ENCODE measurements at regions of chr4 and their contacts with region 1.

Region 1: DNA sequence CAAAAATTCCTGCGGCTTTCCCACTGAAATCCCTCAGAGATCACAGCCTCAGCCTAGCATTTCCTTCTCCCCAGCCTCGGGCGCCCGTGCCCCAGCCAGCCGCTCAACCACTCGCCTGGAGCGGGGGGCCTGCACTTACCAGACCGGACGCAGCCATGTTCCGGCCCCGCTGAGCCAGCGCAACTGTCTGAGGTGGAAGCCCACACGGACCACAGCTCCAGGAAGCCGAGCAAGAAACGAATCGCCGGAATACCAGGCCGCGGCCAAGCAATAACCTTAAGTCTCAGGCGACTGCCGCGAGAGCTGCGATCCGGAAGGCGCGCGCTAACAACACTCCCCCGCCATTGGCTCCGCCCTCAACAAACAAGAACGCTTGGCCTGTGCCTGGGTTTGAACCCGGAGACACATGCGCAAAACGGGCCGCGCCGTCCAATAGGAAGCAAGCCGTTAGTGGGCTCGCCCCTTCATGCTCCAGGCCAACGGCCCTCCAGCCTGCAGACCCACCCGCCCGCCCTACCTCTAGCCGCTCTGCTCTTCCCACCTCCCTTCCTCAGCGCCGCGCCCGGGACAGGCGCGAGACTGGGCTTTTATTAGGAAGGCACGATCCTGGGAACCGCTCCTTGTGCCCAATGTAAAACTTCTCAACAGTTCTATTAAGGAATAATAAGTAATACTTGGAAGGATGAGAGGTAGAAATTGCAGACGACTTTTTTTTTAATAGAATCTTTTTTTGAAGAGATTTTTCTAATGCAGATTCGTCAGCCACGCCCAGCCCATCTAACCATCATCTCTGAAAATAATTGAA is at the start of gene CENPC:
- DNase-seq: peak; percentile 92 to 99 (median 94)
- ATAC-seq: peak; percentile 96
- H3K4me3 ChIP-seq: peak within 1 kb of the TSS; percentile 88
- H3K27ac ChIP-seq: peak within 1 kb of the TSS; percentile 97
- H3K4me1 ChIP-seq: peaks cover 0 to 14% of the 10 kb centered on the region in 2 experiments; a peak in 2 of 5 replicates
- H3K27me3 ChIP-seq: no peaks in the 10 kb centered on the region
- CTCF ChIP-seq: no peak
- EP300 ChIP-seq: peak; percentile 11; the same call in 1 of the 2 replicates
- POLR2A ChIP-seq: peak; percentile 97
- RAD21 ChIP-seq: no peak
- polyA plus RNA-seq, gene CENPC: 18.1 TPM

Region 2: DNA sequence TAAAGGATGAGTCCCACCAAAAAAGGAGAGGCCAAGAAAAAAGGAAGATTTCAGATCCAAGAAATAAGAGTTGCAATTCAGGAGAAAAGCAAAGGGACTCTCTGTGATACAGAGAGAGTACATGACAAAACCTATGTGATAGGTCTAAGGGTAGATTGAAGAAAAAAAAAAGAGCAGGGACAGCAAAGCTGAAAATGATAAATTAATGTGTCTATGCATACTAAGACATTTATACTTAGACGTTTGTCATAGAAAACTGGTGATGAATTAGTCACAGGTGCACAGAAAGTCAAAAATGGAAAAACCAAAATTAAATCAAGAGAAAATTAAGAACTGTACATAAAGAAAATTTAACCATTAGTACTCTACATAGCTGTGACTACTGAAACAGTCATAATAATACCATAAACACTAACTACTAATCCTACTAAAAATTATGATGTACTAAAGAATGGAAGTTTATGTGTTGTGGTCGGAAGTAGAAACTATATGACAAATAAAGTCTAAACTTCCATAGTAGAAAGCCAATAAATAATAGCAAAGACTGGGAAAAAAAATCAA is 10.0 kb before region 1 on chr4:
- CTCF ChIA-PET with region 1: no interaction called
- POLR2A ChIA-PET with region 1: interaction called, 12 read pairs
- in situ Hi-C with region 1: no loop called
- intact Hi-C with region 1: no loop called
- DNase-seq: no peak
- ATAC-seq: no peak
- H3K4me3 ChIP-seq: no peak overlapping the region
- H3K27ac ChIP-seq: no peak overlapping the region
- H3K4me1 ChIP-seq: no peaks in the 10 kb centered on the region
- H3K27me3 ChIP-seq: no peaks in the 10 kb centered on the region
- CTCF ChIP-seq: no peak
- EP300 ChIP-seq: no peak
- POLR2A ChIP-seq: no peak
- RAD21 ChIP-seq: no peak

Region 3: GRCh38 chr4:67575232-67575888 is 30.0 kb after region 1 on chr4:
- CTCF ChIA-PET with region 1: no interaction called
- POLR2A ChIA-PET with region 1: interaction called, 4 read pairs
- in situ Hi-C with region 1: no loop called
- intact Hi-C with region 1: loop called (anchors 1 kb)
- DNase-seq: peak; percentile 35 to 76 (median 38)
- ATAC-seq: peak; percentile 74
- H3K4me3 ChIP-seq: peak overlapping the region; percentile 23; the same call in 1 of the 2 replicates
- H3K27ac ChIP-seq: peak overlapping the region; percentile 94
- H3K4me1 ChIP-seq: peaks cover 3 to 54% of the 10 kb centered on the region in 2 experiments; a peak in 3 of 5 replicates
- H3K27me3 ChIP-seq: no peaks in the 10 kb centered on the region
- CTCF ChIP-seq: no peak
- EP300 ChIP-seq: no peak; the same call in none of the 2 replicates
- POLR2A ChIP-seq: peak; percentile 87
- RAD21 ChIP-seq: no peak

Region 4: GRCh38 chr4:67700738-67701516 is 155.5 kb after region 1 on chr4 and contains the start of gene UBA6:
- CTCF ChIA-PET with region 1: no interaction called
- POLR2A ChIA-PET with region 1: interaction called, 15 read pairs
- in situ Hi-C with region 1: no loop called
- intact Hi-C with region 1: loop called (anchors 2 kb)
- DNase-seq: peak; percentile 95 to 99 (median 96)
- ATAC-seq: peak; percentile 90
- H3K4me3 ChIP-seq: peak within 1 kb of the TSS; percentile 82
- H3K27ac ChIP-seq: peak within 1 kb of the TSS; percentile 89
- H3K4me1 ChIP-seq: peaks cover 3 to 12% of the 10 kb centered on the region in 2 experiments; a peak in 2 of 5 replicates
- H3K27me3 ChIP-seq: no peaks in the 10 kb centered on the region
- CTCF ChIP-seq: peak; percentile 37 to 69 (median 56); a peak in 5 of 6 replicates
- EP300 ChIP-seq: peak; percentile 43; the same call in 1 of the 2 replicates
- POLR2A ChIP-seq: peak; percentile 89
- RAD21 ChIP-seq: no peak
- polyA plus RNA-seq, gene UBA6: 22.9 to 30.1 TPM

Region 5: DNA sequence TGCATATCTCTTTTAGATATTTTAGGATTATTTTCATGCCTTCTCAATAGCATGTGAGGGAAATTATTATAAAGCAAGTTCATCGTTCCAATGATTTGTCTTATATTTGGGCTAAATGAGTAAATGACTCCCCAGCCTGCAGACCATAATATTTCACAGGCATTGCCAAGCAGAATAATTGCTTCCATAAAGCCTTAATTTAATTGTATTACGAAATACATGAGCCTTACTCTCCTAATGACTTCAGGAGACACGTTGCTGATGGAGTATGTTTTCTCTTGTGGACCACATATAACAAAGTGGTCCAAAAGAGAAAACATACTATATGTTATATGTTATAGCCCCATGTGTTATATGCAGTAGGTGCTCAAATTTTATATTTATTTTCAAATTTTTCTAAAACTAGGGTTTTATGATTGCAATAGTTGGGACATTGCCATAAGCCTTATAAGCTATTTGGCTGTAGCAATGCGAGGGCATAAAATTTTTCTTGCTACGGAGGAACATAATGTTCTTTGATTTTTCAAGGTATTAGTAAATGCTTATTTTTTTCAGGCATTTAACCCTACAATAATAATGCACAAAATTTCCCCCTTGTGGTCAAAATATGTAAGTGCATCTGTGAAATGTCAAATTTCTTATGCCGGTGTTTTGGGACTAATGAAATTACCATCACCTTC is 364.6 kb after region 1 on chr4:
- CTCF ChIA-PET with region 1: no interaction called
- POLR2A ChIA-PET with region 1: no interaction called
- in situ Hi-C with region 1: no loop called
- intact Hi-C with region 1: loop called (anchors 2 kb)
- DNase-seq: peak in 3 of 4 experiments; percentile 13 to 30 (median 14)
- ATAC-seq: peak; percentile 61; the same call in 2 of the 3 replicates
- H3K4me3 ChIP-seq: no peak overlapping the region
- H3K27ac ChIP-seq: no peak overlapping the region
- H3K4me1 ChIP-seq: no peaks in the 10 kb centered on the region
- H3K27me3 ChIP-seq: no peaks in the 10 kb centered on the region
- CTCF ChIP-seq: peak in 2 of 3 experiments; percentile 42 to 69; a peak in 4 of 6 replicates
- EP300 ChIP-seq: no peak
- POLR2A ChIP-seq: no peak
- RAD21 ChIP-seq: peak in 1 of 2 experiments; percentile 63; a peak in 3 of 4 replicates